ENCODE measurements at regions of chr9 and their contacts with region 1.

Region 1: DNA sequence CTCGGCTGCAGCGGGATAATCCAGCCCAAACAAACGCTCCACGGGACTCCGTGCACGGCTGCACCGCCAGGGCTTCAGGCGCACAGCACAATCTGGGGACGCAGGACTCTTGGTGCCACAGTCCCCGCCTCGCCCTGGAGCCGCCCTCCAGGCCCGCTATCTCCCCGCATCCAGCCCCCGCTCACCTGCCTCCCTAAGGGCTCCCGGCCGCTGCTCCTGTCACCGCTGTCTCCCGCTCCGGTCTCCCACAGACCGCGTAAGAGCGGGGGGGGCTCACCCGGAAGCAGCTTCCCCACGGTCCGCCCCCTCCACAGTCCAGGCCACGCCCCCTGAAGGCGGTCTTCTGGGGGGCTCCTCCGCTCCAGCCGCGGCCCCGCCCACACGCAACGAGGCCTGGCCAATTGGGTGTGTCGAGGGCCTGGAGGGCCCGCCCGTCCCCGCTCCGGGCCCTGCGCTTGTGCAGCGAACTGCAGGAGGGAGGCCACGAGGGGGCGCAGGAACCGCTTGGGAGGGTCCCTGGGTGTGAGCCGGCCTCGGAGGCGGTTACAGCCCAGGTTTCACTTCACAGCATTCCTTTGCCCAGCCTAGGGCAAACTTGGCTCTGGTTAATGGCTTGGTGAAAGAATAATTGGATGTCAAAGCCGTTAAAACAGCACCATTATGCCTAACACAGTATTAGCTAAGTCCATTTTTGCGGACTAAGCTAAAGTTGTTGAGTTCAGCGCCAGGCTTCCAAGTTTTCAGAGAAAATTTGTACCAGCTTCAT is at the start of gene ALAD:
- DNase-seq: peak; percentile 99 to 100 (median 100)
- H3K4me3 ChIP-seq: peak within 1 kb of the TSS; percentile 82
- H3K4me3 Mint-ChIP-seq: peak within 1 kb of the TSS; percentile 92 to 99 (median 94)
- H3K27ac ChIP-seq: peak within 1 kb of the TSS; percentile 44
- H3K27ac Mint-ChIP-seq: peak within 1 kb of the TSS; percentile 69 to 96 (median 82)
- H3K4me1 ChIP-seq: peaks cover 16% of the 10 kb centered on the region
- H3K4me1 Mint-ChIP-seq: peaks cover 15 to 37% (median 19%) of the 10 kb centered on the region in 3 donors
- H3K27me3 ChIP-seq: no peaks in the 10 kb centered on the region
- H3K27me3 Mint-ChIP-seq: peaks cover 0 to 2% of the 10 kb centered on the region in 2 donors
- total RNA-seq, gene ALAD: 22.3 to 22.8 TPM

Region 2: GRCh38 chr9:113349445-113350094 is 51.6 kb before region 1 on chr9 and contains the start of gene BSPRY:
- CTCF ChIA-PET with region 1: interaction called, 10 read pairs
- POLR2A ChIA-PET with region 1: interaction called, 4 read pairs
- DNase-seq: peak in 4 of 5 donors; percentile 8 to 52 (median 42)
- H3K4me3 ChIP-seq: no peak within 1 kb of the TSS
- H3K4me3 Mint-ChIP-seq: peak within 1 kb of the TSS; percentile 78 to 90 (median 80)
- H3K27ac ChIP-seq: no peak within 1 kb of the TSS
- H3K27ac Mint-ChIP-seq: peak within 1 kb of the TSS in 3 of 8 donors; percentile 34 to 55 (median 40)
- H3K4me1 ChIP-seq: peaks cover 18% of the 10 kb centered on the region
- H3K4me1 Mint-ChIP-seq: peaks cover 18 to 23% (median 22%) of the 10 kb centered on the region in 3 donors
- H3K27me3 ChIP-seq: peaks cover 21% of the 10 kb centered on the region
- H3K27me3 Mint-ChIP-seq: peaks cover 21 to 36% of the 10 kb centered on the region in 2 donors
- total RNA-seq, gene BSPRY: 1.4 to 1.8 TPM

Region 3: DNA sequence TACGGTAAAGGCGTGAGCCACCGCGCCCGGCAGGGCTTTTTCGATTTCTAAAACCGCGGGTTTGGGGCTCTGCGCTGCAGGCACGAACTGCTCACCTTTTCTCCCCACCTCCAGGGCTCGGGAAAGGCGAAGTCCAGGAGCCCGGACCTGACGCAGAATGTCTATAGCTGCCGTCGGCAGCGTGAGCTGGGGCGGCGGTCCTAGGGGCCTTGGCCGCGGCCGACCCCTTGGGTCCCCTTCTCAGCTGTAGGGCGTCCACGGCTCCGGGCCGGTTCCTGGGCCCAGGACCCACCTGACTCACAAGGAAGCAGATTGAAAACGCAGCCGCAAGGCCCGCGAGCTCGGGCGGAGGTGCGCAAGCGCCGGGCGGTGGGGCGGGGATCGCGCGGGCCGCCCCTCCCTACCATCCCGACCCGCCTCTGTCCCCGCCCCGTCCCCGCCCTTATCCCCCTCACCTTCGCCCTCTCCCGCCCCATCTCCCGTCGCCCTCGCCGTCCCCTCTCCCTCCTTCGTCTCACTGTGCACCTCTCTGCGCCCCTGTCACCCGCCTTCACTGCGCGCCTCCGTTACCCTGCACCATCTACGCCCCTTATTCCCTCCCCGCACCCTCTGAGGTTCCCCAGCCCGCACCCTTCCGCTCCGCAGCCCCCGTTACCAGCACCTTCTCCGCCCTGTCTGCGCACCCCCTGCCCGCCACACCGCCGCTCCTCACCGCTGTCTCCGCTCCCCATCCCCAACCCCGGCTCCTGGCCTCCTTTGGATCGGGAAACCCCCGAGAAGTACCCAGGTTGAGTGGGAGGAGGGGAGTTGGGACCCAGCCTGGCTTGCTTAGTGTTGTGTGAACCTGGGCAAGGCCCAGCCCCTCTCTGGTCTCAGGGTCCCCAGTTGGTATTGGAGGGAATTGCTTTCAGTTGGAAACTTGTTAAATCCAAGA is 24.3 kb before region 1 on chr9 and contains the start of gene HDHD3:
- CTCF ChIA-PET with region 1: interaction called, 7 read pairs
- POLR2A ChIA-PET with region 1: interaction called, 12 read pairs
- DNase-seq: peak; percentile 71 to 86 (median 76)
- H3K4me3 ChIP-seq: peak within 1 kb of the TSS; percentile 73
- H3K4me3 Mint-ChIP-seq: peak within 1 kb of the TSS; percentile 87 to 93 (median 89)
- H3K27ac ChIP-seq: peak within 1 kb of the TSS; percentile 69
- H3K27ac Mint-ChIP-seq: peak within 1 kb of the TSS; percentile 80 to 97 (median 88)
- H3K4me1 ChIP-seq: peaks cover 9% of the 10 kb centered on the region
- H3K4me1 Mint-ChIP-seq: peaks cover 9 to 25% (median 16%) of the 10 kb centered on the region in 3 donors
- H3K27me3 ChIP-seq: no peaks in the 10 kb centered on the region
- H3K27me3 Mint-ChIP-seq: no peaks in the 10 kb centered on the region
- total RNA-seq, gene HDHD3: 11.9 to 14.3 TPM

Region 4: GRCh38 chr9:113436728-113437471 is 35.7 kb after region 1 on chr9:
- CTCF ChIA-PET with region 1: no interaction called
- POLR2A ChIA-PET with region 1: no interaction called
- DNase-seq: no peak
- H3K4me3 ChIP-seq: no peak overlapping the region
- H3K4me3 Mint-ChIP-seq: no peak overlapping the region
- H3K27ac ChIP-seq: no peak overlapping the region
- H3K27ac Mint-ChIP-seq: no peak overlapping the region
- H3K4me1 ChIP-seq: no peaks in the 10 kb centered on the region
- H3K4me1 Mint-ChIP-seq: no peaks in the 10 kb centered on the region
- H3K27me3 ChIP-seq: no peaks in the 10 kb centered on the region
- H3K27me3 Mint-ChIP-seq: peaks cover 8 to 10% of the 10 kb centered on the region in 2 donors

Measured in CD8-positive, alpha-beta memory T cell (primary cell).